Endothelial cell of umbilical vein (primary cell): ENCODE measurements at regions of chr14 and their contacts with region 1.

Region 1: GRCh38 chr14:91264151-91265150 is 19.9 kb upstream of the GPR68 start:
- DNase-seq: no peak
- H3K4me3 ChIP-seq: peak overlapping the region; percentile 34 to 45 (median 40)
- H3K27ac ChIP-seq: no peak overlapping the region
- H3K4me1 ChIP-seq: peaks cover 3% of the 10 kb centered on the region
- H3K27me3 ChIP-seq: no peaks in the 10 kb centered on the region
- CTCF ChIP-seq: no peak
- POLR2A ChIP-seq: no peak

Region 2: DNA sequence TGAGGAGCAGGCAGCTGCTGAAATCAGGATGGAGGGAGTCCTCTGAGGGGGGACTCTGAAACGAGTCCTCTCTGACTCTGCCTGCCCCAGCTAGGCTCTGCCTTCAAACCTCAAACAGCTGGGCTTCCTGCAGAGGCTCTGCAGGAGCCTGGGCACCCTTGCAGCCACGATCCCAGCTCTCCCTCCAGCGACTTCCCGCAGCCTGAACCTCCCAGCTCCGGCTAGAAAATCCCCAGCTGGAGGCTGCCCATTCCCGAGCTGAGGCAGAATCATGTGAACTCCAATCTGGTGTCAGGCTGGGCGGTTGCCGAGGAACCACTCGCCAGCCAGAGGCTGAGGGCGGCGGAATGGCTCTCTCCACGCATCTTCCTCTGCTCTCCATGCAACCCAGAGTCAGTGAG is 19.9 kb before region 1 on chr14 and contains the start of gene GPR68:
- CTCF ChIA-PET with region 1: interaction called, 3 read pairs
- POLR2A ChIA-PET with region 1: no interaction called
- dilution Hi-C with region 1: no loop called
- intact Hi-C with region 1: loop called (anchors 1 kb)
- DNase-seq: no peak
- H3K4me3 ChIP-seq: no peak within 1 kb of the TSS
- H3K27ac ChIP-seq: peak within 1 kb of the TSS; percentile 51
- H3K4me1 ChIP-seq: peaks cover 19% of the 10 kb centered on the region
- H3K27me3 ChIP-seq: no peaks in the 10 kb centered on the region
- CTCF ChIP-seq: no peak
- POLR2A ChIP-seq: no peak
- total RNA-seq, gene GPR68: 0.24 and 0.51 TPM in 2 replicates

Region 3: DNA sequence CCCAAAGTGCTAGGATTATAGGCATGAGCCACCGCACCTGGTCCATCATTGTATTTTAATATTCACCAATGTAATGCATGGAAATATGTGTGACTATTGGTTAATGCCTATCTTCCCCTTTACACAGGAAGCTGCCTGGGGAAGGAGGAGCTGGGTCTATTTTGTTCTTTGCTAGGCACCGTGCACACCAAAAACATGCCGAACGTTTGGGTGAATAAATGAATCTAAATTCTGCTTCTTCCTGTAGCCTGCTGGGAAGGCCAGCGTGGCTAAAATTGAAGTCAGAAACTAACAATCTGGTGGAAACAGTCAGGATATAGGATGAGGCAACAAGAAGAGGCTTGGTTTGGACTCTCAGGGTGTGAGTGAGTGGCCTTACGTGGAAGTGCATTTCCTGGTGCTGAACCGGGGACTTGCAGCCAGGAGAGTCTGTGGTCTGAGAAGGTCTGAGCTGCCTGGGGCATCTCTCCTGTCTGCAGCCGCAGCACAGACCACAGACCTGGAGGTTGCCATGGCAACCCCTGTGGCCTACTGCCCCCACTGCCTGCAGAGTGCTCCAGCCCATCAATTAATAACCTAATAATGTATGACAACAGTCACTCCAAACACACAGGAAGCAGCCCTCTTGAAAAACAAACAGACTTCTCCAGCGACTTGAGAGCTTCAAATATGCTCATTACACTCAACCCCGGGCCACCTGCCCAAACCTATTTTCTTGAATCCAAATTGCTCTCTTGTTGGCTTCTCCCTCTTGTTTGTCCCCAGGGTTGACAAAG is 14.4 kb before region 1 on chr14:
- CTCF ChIA-PET with region 1: interaction called, 3 read pairs
- POLR2A ChIA-PET with region 1: interaction called, 12 read pairs
- dilution Hi-C with region 1: no loop called
- intact Hi-C with region 1: no loop called
- DNase-seq: no peak
- H3K4me3 ChIP-seq: no peak overlapping the region
- H3K27ac ChIP-seq: no peak overlapping the region
- H3K4me1 ChIP-seq: peaks cover 2% of the 10 kb centered on the region
- H3K27me3 ChIP-seq: no peaks in the 10 kb centered on the region
- CTCF ChIP-seq: no peak
- POLR2A ChIP-seq: no peak